Gastrocnemius medialis (tissue), 4 donors: ENCODE measurements at regions of chr15 and their contacts with region 1.

Region 1: GRCh38 chr15:92625251-92625980 is 30.2 kb downstream of the FAM174B start:
- DNase-seq: no peak
- ATAC-seq: no peak
- H3K4me3 ChIP-seq: no peak overlapping the region
- H3K27ac ChIP-seq: peak overlapping the region; percentile 84 to 92 (median 90)
- H3K4me1 ChIP-seq: peaks cover 20 to 28% of the 10 kb centered on the region in 2 donors
- H3K27me3 ChIP-seq: no peaks in the 10 kb centered on the region
- CTCF ChIP-seq: no peak
- POLR2A ChIP-seq: no peak

Region 2: DNA sequence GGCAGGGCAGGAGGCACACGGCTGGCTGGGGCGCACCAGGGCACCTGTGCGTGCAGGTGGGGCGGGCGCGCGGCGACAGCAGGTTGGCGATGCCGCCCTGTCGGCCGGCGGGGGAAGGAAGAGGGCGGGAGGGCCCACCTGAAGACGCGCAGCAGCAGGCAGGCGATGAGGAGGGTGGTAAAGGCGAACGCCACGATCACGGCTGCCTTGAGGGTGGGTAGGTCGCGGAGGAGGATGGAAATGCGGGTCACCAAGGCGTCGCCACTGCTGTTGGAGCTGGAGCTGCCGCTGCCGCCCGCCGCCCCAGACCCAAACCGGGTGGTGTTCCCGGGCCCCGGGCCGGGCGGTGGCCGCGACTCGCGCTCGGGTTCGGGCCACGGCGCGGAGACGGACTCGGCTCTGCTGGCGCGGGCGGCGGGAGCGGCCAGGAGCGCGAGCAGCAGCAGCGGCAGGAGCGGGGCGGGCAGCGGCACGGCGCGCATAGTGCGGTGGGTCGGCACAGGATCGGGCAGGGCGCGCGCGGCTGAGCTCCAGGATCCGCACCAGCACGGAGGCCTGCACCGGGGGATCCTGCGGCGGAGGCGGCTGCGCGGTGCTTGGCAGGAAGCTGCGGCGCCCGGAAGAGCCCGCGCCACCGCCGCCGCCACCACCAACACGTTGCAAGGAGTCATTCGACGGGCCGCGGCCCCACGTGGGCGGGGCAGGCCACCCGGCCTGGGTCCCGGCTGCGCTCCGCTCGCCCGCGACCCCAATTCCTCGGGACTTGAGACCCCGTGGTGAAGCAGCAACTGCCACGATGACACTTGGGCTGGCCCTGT is 30.0 kb after region 1 on chr15 and contains the start of gene FAM174B:
- in situ Hi-C with region 1: no loop called
- intact Hi-C with region 1: loop called (anchors 2 kb)
- DNase-seq: peak in 1 of 2 donors; percentile 47
- ATAC-seq: peak; percentile 83 to 86
- H3K4me3 ChIP-seq: peak within 1 kb of the TSS; percentile 55 to 65 (median 62)
- H3K27ac ChIP-seq: peak within 1 kb of the TSS; percentile 40 to 79 (median 54)
- H3K4me1 ChIP-seq: peaks cover 0 to 4% of the 10 kb centered on the region in 2 donors
- H3K27me3 ChIP-seq: no peaks in the 10 kb centered on the region
- CTCF ChIP-seq: no peak
- POLR2A ChIP-seq: peak; percentile 61 to 75
- total RNA-seq, gene FAM174B: 7.6 to 22.5 (median 11.6) TPM